IMR-90 (cell line): ENCODE measurements at regions of chr16 and their contacts with region 1.

Region 1: GRCh38 chr16:65306300-65306699 is 184.4 kb upstream of the CDH11 start:
- DNase-seq: no peak
- ATAC-seq: no peak
- H3K4me3 ChIP-seq: no peak overlapping the region
- H3K27ac ChIP-seq: no peak overlapping the region
- H3K4me1 ChIP-seq: peaks cover 6% of the 10 kb centered on the region
- H3K27me3 ChIP-seq: no peaks in the 10 kb centered on the region
- CTCF ChIP-seq: no peak
- POLR2A ChIP-seq: no peak
- RAD21 ChIP-seq: no peak

Region 2: DNA sequence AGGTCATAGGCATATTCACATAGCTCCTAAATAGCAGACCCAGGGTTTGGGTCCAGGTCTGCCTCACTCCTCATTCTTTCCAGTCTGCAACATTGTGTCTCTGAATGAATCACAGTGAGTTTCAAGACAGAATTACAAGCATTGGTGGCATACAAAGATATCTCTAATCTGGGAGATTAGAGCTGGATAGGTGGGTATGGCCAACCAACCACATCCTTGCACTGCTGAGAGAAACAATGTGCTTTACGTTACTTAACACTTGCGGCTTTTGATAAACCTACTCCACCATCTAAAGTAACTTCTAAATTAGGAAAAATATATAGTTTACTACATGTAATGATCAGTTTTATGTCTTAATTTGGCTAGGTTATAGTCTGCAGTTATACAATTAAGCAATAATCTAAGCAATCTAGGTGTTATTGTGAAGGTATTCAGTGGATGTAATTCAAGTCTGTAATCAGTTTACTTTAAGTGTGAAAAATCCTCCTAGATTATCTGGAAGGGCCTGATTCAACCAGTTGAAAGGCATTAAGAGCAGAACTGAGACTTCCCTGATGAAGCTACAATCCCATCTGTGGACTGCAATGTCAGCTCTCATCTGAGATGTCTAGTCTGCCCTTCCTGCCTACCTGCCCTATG is 211.1 kb before region 1 on chr16:
- CTCF ChIA-PET with region 1: interaction called, 12 read pairs
- POLR2A ChIA-PET with region 1: no interaction called
- dilution Hi-C with region 1: no loop called
- in situ Hi-C with region 1: no loop called
- intact Hi-C with region 1: no loop called
- DNase-seq: no peak
- ATAC-seq: no peak
- H3K4me3 ChIP-seq: no peak overlapping the region
- H3K27ac ChIP-seq: no peak overlapping the region
- H3K4me1 ChIP-seq: peaks cover 3% of the 10 kb centered on the region; the same call in 1 of the 2 replicates
- H3K27me3 ChIP-seq: no peaks in the 10 kb centered on the region
- CTCF ChIP-seq: no peak
- POLR2A ChIP-seq: no peak
- RAD21 ChIP-seq: no peak

Region 3: DNA sequence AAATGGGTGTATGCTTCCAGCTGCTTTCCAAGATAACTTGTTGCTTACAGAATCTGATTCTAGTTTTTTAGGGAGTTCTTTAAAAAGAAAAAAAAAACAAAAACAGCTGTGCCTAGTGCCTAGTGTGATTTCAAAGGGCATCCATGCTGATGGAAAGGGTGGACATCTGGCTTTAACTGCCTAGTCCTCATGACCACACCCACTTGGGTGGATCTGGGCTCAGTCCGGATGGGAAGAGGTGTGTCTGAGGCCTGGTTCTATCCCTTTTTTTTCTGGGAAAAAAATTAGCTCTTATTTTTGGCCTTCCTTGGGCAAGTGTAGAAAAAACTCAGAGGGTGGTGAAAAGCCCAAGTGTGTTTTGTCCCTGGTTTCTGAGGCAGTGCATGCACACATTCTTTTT is 52.2 kb before region 1 on chr16:
- CTCF ChIA-PET with region 1: no interaction called
- POLR2A ChIA-PET with region 1: no interaction called
- dilution Hi-C with region 1: no loop called
- in situ Hi-C with region 1: no loop called
- intact Hi-C with region 1: loop called (anchors 1 kb)
- DNase-seq: no peak
- ATAC-seq: no peak
- H3K4me3 ChIP-seq: no peak overlapping the region
- H3K27ac ChIP-seq: no peak overlapping the region
- H3K4me1 ChIP-seq: no peaks in the 10 kb centered on the region
- H3K27me3 ChIP-seq: no peaks in the 10 kb centered on the region
- CTCF ChIP-seq: no peak
- POLR2A ChIP-seq: no peak
- RAD21 ChIP-seq: no peak

Region 4: DNA sequence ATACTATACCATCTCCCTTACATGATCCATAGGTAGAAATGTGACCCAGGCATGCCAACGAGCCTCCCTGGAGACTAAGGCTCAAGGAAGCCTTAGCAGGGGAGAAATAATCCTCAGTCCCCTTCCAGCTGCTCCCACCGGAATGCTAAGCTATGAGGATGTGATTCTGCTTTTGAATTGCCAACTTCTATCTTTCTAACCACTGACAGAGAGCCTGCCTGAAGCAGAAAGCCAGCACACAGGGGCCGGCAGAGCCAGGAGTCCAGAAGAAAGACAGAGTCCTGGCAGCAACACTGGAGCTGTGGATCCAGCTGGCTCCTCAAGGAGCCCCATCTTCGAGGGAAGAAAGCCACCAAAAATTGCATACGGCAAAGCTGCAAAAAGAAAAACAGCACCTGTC is 480.6 kb after region 1 on chr16:
- CTCF ChIA-PET with region 1: no interaction called
- POLR2A ChIA-PET with region 1: no interaction called
- dilution Hi-C with region 1: no loop called
- in situ Hi-C with region 1: no loop called
- intact Hi-C with region 1: no loop called
- DNase-seq: no peak
- ATAC-seq: no peak
- H3K4me3 ChIP-seq: no peak overlapping the region
- H3K27ac ChIP-seq: no peak overlapping the region
- H3K4me1 ChIP-seq: peaks cover 6% of the 10 kb centered on the region; the same call in 1 of the 2 replicates
- H3K27me3 ChIP-seq: peaks cover 11% of the 10 kb centered on the region
- CTCF ChIP-seq: no peak
- POLR2A ChIP-seq: no peak
- RAD21 ChIP-seq: no peak